CD14-positive monocyte (primary cell): ENCODE measurements at regions of chr11 and their contacts with region 1.

Region 1: DNA sequence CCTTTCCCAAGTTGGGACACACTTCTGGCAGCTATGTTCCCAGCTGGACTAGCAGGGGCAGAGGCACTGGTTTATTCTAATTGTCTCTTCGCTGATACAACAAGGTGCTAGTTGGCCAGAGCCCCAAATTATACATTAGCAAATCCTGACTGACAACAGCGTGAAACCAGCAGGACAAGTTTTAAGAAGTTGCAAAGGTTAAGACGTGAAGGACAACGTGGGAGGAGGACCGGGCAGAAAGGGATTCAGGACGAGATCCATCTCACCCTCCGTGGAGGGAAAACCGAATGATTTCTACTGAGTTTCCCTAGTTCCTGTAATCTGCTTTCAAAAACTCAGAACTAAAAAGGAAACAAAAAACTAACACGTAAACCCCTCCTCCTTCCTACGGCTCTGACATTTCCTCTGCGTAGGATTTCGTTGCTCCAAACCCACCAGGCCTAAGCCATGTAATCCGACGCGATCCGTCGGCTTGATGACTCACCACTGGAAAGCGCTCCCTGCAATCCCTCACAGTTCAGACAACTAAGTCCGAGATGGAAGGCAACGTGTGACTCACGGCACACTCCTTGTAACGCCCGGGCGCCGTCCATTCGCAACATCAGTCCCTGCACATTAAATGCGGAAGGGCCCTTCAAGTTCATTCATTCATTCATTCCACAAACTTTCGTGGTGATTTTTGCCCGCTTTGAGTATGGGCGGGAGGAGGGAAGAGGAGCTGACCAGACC is 703 bp downstream of the POGLUT3 start:
- DNase-seq: peak; percentile 99
- H3K4me3 ChIP-seq: peak overlapping the region; percentile 29 to 91 (median 90)
- H3K4me3 Mint-ChIP-seq: peak overlapping the region; percentile 87 to 97
- H3K27ac ChIP-seq: peak overlapping the region; percentile 52 to 94
- H3K27ac Mint-ChIP-seq: peak overlapping the region; percentile 96 to 99 (median 98)
- H3K4me1 ChIP-seq: peaks cover 12 to 14% of the 10 kb centered on the region in 2 donors
- H3K4me1 Mint-ChIP-seq: peaks cover 12% of the 10 kb centered on the region
- H3K27me3 ChIP-seq: no peaks in the 10 kb centered on the region
- H3K27me3 Mint-ChIP-seq: peaks cover 0 to 4% (median 0%) of the 10 kb centered on the region in 3 donors
- CTCF ChIP-seq: no peak

Region 2: GRCh38 chr11:107565219-107565937 is 932.1 kb before region 1 on chr11 and contains the start of gene ALKBH8:
- intact Hi-C with region 1: loop called in 1 of 2 experiments (anchors 5 kb)
- DNase-seq: peak; percentile 68 to 89 (median 81)
- H3K4me3 ChIP-seq: peak within 1 kb of the TSS; percentile 61 to 85 (median 74)
- H3K4me3 Mint-ChIP-seq: peak within 1 kb of the TSS; percentile 92 to 94
- H3K27ac ChIP-seq: peak within 1 kb of the TSS; percentile 92 to 96
- H3K27ac Mint-ChIP-seq: peak within 1 kb of the TSS; percentile 93 to 99 (median 97)
- H3K4me1 ChIP-seq: peaks cover 20 to 21% of the 10 kb centered on the region in 2 donors
- H3K4me1 Mint-ChIP-seq: peaks cover 25% of the 10 kb centered on the region
- H3K27me3 ChIP-seq: peaks cover 0 to 2% of the 10 kb centered on the region in 2 donors
- H3K27me3 Mint-ChIP-seq: peaks cover 1 to 5% (median 2%) of the 10 kb centered on the region in 3 donors
- CTCF ChIP-seq: no peak
- polyA plus RNA-seq, gene ALKBH8: 0.83 to 2.6 (median 1.8) TPM

Region 3: DNA sequence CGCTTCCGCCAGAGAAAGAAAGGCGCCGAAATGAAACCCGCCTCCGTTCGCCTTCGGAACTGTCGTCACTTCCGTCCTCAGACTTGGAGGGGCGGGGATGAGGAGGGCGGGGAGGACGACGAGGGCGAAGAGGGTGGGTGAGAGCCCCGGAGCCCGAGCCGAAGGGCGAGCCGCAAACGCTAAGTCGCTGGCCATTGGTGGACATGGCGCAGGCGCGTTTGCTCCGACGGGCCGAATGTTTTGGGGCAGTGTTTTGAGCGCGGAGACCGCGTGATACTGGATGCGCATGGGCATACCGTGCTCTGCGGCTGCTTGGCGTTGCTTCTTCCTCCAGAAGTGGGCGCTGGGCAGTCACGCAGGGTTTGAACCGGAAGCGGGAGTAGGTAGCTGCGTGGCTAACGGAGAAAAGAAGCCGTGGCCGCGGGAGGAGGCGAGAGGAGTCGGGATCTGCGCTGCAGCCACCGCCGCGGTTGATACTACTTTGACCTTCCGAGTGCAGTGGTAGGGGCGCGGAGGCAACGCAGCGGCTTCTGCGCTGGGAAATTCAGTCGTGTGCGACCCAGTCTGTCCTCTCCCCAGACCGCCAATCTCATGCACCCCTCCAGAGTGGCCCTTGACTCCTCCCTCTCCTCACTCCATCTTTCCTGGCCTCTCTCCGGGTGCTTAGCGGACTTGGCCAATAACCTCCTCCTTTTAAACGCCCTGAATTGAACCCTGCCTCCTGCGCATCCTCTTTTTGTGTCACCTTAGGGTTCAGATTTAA is 274.6 kb before region 1 on chr11 and contains the start of gene ATM:
- intact Hi-C with region 1: loop called in 1 of 2 experiments (anchors 10 kb)
- DNase-seq: peak; percentile 99 to 100 (median 99)
- H3K4me3 ChIP-seq: peak within 1 kb of the TSS; percentile 72 to 89 (median 86)
- H3K4me3 Mint-ChIP-seq: peak within 1 kb of the TSS in 1 of 2 donors; percentile 98
- H3K27ac ChIP-seq: peak within 1 kb of the TSS; percentile 99
- H3K27ac Mint-ChIP-seq: no peak within 1 kb of the TSS
- H3K4me1 ChIP-seq: peaks cover 49 to 64% of the 10 kb centered on the region in 2 donors
- H3K4me1 Mint-ChIP-seq: peaks cover 43% of the 10 kb centered on the region
- H3K27me3 ChIP-seq: no peaks in the 10 kb centered on the region
- H3K27me3 Mint-ChIP-seq: peaks cover 0 to 3% (median 0%) of the 10 kb centered on the region in 3 donors
- CTCF ChIP-seq: peak; percentile 76
- polyA plus RNA-seq, gene ATM: 13.2 to 56.7 (median 21.4) TPM

Region 4: GRCh38 chr11:108467091-108467823 is 30.2 kb before region 1 on chr11 and contains the start of gene C11orf65:
- intact Hi-C with region 1: loop called in 1 of 2 experiments (anchors 2 kb)
- DNase-seq: peak; percentile 95 to 97 (median 96)
- H3K4me3 ChIP-seq: peak within 1 kb of the TSS; percentile 67 to 91 (median 69)
- H3K4me3 Mint-ChIP-seq: peak within 1 kb of the TSS; percentile 97 to 98
- H3K27ac ChIP-seq: peak within 1 kb of the TSS; percentile 95 to 98
- H3K27ac Mint-ChIP-seq: peak within 1 kb of the TSS; percentile 99 to 100 (median 100)
- H3K4me1 ChIP-seq: peaks cover 18 to 25% of the 10 kb centered on the region in 2 donors
- H3K4me1 Mint-ChIP-seq: peaks cover 21% of the 10 kb centered on the region
- H3K27me3 ChIP-seq: no peaks in the 10 kb centered on the region
- H3K27me3 Mint-ChIP-seq: peaks cover 3 to 4% (median 4%) of the 10 kb centered on the region in 3 donors
- CTCF ChIP-seq: no peak
- polyA plus RNA-seq, gene C11orf65: not detected

Region 5: GRCh38 chr11:108703916-108704315 is 206.4 kb after region 1 on chr11:
- intact Hi-C with region 1: no loop called
- DNase-seq: no peak
- H3K4me3 ChIP-seq: no peak overlapping the region
- H3K4me3 Mint-ChIP-seq: no peak overlapping the region
- H3K27ac ChIP-seq: no peak overlapping the region
- H3K27ac Mint-ChIP-seq: no peak overlapping the region
- H3K4me1 ChIP-seq: no peaks in the 10 kb centered on the region
- H3K4me1 Mint-ChIP-seq: no peaks in the 10 kb centered on the region
- H3K27me3 ChIP-seq: no peaks in the 10 kb centered on the region
- H3K27me3 Mint-ChIP-seq: no peaks in the 10 kb centered on the region
- CTCF ChIP-seq: no peak